AG04449 (cell line): ENCODE measurements at regions of chr14 and their contacts with region 1.

Region 1: GRCh38 chr14:73662487-73662943 is 17.7 kb downstream of the DNAL1 start:
- DNase-seq: peak; percentile 65
- H3K4me3 ChIP-seq: no peak overlapping the region
- CTCF ChIP-seq: peak; percentile 70

Region 2: DNA sequence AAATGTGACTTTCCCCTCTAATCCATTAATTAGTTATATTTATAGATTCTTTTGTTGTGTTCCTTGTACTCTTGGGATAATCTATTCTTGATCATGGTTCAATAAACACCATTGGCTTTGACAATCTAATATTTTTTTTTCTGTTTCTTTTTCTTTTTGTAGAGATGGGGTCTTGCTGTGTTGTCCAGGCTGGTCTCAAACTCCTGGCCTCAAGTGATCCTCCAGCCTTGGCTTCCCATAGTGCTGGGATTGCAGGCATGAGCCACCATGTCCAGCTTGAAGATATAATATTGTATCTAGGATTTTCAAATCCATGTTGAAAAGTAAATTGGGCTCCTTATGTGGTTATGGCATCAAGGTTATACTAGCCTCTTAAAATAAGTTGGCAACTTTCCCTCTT is 11.5 kb before region 1 on chr14:
- CTCF ChIA-PET with region 1: interaction called, 10 read pairs
- POLR2A ChIA-PET with region 1: no interaction called
- DNase-seq: no peak
- H3K4me3 ChIP-seq: no peak overlapping the region
- CTCF ChIP-seq: no peak

Region 3: DNA sequence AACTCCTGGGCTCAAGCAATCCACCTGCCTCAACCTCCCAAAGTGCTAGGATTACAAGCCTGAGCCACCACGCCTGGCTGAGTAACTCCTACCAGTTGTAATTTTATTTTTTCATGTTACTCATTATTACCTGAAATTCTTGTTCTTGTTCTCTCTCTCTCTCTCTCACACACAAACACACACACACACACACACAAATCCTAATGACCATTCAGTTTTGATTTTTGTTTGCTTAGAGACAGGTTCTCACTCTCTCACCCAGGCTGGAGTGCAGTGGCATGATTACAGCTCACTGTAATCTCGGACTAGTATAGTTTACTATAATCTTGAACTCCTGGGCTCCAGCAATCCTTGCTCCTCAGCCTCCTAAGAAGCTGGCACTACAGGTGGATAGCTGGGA is 12.5 kb after region 1 on chr14:
- CTCF ChIA-PET with region 1: interaction called, 31 read pairs
- POLR2A ChIA-PET with region 1: no interaction called
- DNase-seq: no peak
- H3K4me3 ChIP-seq: no peak overlapping the region
- CTCF ChIP-seq: no peak

Region 4: DNA sequence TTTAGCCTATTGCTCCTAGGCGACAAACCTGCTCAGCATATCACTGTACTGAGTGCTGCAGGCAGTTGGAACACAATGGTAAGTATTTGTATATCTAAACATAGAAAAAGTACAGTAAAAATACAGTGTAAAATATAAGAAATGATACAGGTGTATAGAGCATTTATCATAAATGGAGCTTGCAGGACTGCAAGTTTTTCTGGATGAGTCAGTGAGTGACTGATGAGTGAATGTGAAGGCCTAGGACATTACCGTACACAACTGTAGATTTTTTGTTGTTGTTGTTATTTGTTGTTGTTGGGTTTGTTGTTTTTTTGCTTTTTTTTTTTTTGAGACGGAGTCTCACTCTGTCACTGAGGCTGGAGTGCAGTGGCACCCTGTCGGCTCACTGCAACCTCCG is 18.3 kb after region 1 on chr14:
- CTCF ChIA-PET with region 1: interaction called, 31 read pairs
- POLR2A ChIA-PET with region 1: interaction called, 3 read pairs
- DNase-seq: no peak
- H3K4me3 ChIP-seq: no peak overlapping the region
- CTCF ChIP-seq: no peak